Common myeloid progenitor, CD34-positive (primary cell): ENCODE measurements at regions of chr11 and their contacts with region 1.

Region 1: DNA sequence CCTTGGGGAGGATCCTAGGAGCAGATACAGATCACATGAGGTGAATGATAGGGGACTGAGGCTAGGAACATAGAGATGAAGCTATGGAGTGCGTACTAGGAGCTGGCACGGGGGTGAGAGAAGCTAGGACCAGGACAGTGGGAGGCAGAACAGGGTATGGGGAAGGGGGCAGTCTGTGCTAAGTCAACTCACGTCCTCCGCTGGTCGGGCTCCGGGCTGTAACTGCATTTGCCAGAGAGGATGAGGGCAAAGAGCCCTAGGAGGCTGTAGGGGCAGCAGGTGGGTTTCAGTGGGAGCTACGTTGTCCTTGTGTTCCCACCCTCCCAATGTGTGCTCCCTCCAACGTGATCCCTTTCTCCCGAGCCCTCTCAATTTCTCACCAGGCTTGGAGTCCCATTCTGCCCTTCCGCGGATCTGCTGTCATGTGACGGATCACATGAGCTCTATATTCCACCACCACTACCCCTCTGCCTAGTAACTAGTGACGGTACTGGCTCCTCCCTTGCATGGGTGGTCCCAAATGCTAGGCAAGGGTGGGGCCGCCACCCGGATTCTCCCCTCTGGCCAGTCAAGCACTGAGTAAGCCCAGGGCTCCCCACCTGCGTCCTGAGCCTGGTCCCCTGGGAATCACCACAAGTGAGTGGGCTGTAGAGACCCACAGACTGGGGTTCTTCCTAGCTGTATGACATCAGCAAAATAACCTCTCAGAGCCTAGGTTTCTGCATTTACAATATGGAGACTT is at the start of gene TPP1:
- DNase-seq: peak; percentile 91 to 93 (median 92)
- H3K4me3 ChIP-seq: peak within 1 kb of the TSS; percentile 71 to 94 (median 88)
- H3K27ac ChIP-seq: peak within 1 kb of the TSS; percentile 82 to 96
- H3K4me1 ChIP-seq: peaks cover 9 to 33% (median 26%) of the 10 kb centered on the region in 4 experiments
- H3K27me3 ChIP-seq: no peaks in the 10 kb centered on the region

Region 2: DNA sequence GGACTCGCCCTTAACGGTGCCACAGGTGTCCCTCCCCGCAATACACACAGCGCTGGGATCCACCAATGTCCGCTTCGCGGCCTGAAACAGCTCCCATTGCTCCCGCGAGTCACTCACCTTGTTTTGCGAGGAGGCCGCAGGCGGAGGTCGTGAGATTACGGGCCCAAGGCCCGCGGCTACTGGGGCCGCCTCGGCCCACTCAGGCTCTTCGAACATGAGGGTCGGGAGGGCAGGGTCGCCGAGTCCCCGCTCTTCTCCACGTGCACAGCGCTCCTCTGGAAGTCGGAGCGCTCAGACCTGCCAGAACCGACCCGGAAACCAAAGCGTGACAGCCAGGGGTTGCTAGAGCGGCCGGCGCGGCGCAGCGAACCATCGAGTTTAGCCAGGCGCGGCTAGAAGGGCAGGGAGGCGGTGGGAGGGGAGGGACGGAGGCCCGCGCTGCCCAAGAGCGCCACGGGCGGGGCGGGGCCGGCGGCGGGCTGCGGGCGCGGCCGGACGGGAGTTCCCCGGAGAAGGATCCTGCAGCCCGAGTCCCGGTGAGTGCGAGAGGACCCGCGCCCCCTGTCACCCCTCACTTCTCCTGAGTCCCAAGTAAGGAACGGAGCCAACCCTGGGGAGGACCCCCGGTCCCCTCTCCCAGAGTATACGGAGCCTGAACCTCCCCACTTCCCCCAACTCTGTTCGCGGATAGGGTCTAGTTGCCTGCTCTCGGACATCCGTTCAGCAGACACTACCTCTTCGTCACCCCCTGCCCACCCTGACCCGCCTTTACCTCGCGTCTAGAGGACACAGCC is 15.7 kb before region 1 on chr11 and contains the starts of genes ILK and RRP8:
- CTCF ChIA-PET with region 1: interaction called, 24 read pairs
- POLR2A ChIA-PET with region 1: interaction called, 8 read pairs
- DNase-seq: peak; percentile 89 to 92 (median 90)
- H3K4me3 ChIP-seq: peak within 1 kb of the TSS; percentile 61 to 97 (median 86)
- H3K27ac ChIP-seq: peak within 1 kb of the TSS; percentile 82 to 87
- H3K4me1 ChIP-seq: peaks cover 34 to 67% (median 56%) of the 10 kb centered on the region in 4 experiments
- H3K27me3 ChIP-seq: no peaks in the 10 kb centered on the region

Region 3: GRCh38 chr11:6682936-6683861 is 64.0 kb after region 1 on chr11 and contains the start of gene MRPL17:
- CTCF ChIA-PET with region 1: interaction called, 15 read pairs
- POLR2A ChIA-PET with region 1: no interaction called
- DNase-seq: peak; percentile 99 to 100 (median 99)
- H3K4me3 ChIP-seq: peak within 1 kb of the TSS; percentile 51 to 99 (median 96)
- H3K27ac ChIP-seq: peak within 1 kb of the TSS; percentile 77 to 90
- H3K4me1 ChIP-seq: peaks cover 7 to 23% (median 18%) of the 10 kb centered on the region in 4 experiments
- H3K27me3 ChIP-seq: no peaks in the 10 kb centered on the region